Prostate gland (tissue), 2 donors: ENCODE measurements at regions of chr17 and their contacts with region 1.

Region 1: GRCh38 chr17:21252796-21253645 is at the start of gene NATD1:
- DNase-seq: peak; percentile 87
- H3K4me3 ChIP-seq: peak within 1 kb of the TSS; percentile 59 to 69
- H3K27ac ChIP-seq: peak within 1 kb of the TSS; percentile 73 to 75
- H3K4me1 ChIP-seq: peaks cover 9% of the 10 kb centered on the region
- H3K27me3 ChIP-seq: no peaks in the 10 kb centered on the region
- CTCF ChIP-seq: peak in 1 of 4 experiments; percentile 6
- POLR2A ChIP-seq: peak; percentile 59
- total RNA-seq, gene NATD1: 16.5 to 26.3 TPM

Region 2: GRCh38 chr17:21214015-21214776 is 38.8 kb before region 1 on chr17 and contains the start of gene TMEM11:
- intact Hi-C with region 1: loop called (anchors 5 kb)
- DNase-seq: peak; percentile 94
- H3K4me3 ChIP-seq: peak within 1 kb of the TSS; percentile 74 to 93
- H3K27ac ChIP-seq: peak within 1 kb of the TSS; percentile 91 to 93
- H3K4me1 ChIP-seq: peaks cover 37% of the 10 kb centered on the region
- H3K27me3 ChIP-seq: no peaks in the 10 kb centered on the region
- CTCF ChIP-seq: peak in 2 of 4 experiments; percentile 15 to 26
- POLR2A ChIP-seq: peak; percentile 74
- total RNA-seq, gene TMEM11: 33.1 to 44.1 TPM

Region 3: DNA sequence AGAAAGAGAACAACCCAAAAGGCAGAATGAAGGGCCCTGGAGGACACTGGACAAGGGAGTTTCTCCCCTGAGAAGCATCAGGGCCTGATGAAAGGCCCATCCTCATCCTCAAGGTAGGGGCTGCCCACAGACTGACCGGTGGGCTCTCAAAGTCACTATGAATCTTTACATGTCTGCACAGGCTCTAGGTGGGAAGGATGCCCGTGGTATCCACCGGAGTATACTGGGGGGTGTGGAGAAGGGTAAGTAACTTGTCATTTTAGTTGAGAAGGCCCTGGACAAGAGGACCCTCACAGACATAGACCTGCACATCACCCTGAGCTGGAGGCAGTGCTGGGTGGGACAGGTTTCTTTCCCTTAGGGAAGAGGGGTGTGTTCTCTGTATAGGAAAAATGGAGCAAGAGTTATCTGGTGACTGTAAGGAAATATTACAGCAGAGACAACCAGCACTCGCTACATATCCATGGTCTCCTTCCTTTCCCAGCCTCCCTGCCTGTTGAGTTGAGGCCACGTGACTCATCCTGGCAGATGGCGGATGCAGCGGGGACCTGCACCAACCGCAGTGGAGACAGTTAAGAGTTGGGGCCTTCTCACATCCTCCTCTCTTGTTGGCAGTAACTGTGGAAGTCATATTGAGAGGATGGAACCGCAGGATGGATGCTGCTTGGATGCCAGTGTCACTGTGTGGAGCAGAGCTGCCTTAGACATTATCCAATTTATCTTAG is 77.6 kb after region 1 on chr17:
- intact Hi-C with region 1: no loop called
- DNase-seq: no peak
- H3K4me3 ChIP-seq: no peak overlapping the region
- H3K27ac ChIP-seq: no peak overlapping the region
- H3K4me1 ChIP-seq: no peaks in the 10 kb centered on the region
- H3K27me3 ChIP-seq: no peaks in the 10 kb centered on the region
- CTCF ChIP-seq: no peak
- POLR2A ChIP-seq: no peak

Region 4: GRCh38 chr17:21742326-21742725 is 489.3 kb after region 1 on chr17:
- intact Hi-C with region 1: no loop called
- DNase-seq: no peak
- H3K4me3 ChIP-seq: no peak overlapping the region
- H3K27ac ChIP-seq: no peak overlapping the region
- H3K4me1 ChIP-seq: no peaks in the 10 kb centered on the region
- H3K27me3 ChIP-seq: no peaks in the 10 kb centered on the region
- CTCF ChIP-seq: no peak
- POLR2A ChIP-seq: no peak